ENCODE measurements at regions of chr12 and their contacts with region 1.

Region 1: DNA sequence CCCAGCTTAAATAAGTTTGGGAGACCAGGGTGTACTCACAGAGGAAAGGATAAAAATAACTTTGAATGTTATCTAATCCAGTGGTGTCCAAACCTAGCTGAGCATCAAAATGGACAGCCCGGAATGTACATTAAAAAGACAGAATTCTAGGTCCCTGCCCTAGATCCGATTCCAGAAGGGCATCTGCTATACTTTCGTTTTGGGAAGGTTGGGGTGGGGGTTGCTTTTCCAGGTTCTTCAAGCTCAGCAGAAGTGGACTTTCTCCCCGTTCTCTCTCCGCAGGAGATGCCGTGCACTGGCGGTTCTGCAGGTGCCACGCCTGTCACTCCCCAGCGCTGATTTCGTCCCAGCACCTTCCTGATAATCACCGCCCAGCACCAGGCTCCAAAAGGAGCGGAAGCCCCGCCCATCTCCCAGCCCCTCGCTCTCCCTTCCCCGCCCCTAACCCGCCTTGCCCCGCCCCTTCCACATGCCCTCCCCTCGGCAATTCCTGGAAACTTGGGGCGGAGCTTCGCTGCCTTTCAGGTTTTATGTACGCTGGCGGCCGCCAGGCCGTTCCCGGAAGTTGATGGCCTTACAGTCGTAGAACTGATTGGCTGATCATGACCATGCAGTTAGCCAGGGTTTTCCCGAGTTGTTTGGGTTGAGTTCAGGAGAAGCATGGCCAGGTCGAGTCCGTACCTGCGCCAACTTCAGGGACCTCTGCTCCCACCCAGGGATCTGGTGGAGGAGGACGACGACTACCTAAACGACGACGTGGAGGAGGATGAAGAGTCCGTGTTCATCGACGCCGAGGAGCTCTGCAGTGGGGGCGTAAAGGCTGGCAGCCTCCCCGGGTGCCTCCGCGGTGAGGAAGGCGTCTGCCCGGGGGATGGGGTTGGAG is at the start of gene HELB:
- DNase-seq: peak; percentile 99
- H3K4me3 Mint-ChIP-seq: peak within 1 kb of the TSS; percentile 100
- H3K27ac Mint-ChIP-seq: peak within 1 kb of the TSS; percentile 100
- H3K4me1 Mint-ChIP-seq: peaks cover 36% of the 10 kb centered on the region
- H3K27me3 Mint-ChIP-seq: no peaks in the 10 kb centered on the region
- total RNA-seq, gene HELB: 23.0 to 23.7 TPM

Region 2: GRCh38 chr12:64403707-64404469 is 1898.3 kb before region 1 on chr12 and contains the start of gene XPOT:
- CTCF ChIA-PET with region 1: no interaction called
- intact Hi-C with region 1: loop called (anchors 10 kb)
- DNase-seq: peak; percentile 94
- H3K4me3 Mint-ChIP-seq: peak within 1 kb of the TSS; percentile 95
- H3K27ac Mint-ChIP-seq: peak within 1 kb of the TSS; percentile 97
- H3K4me1 Mint-ChIP-seq: peaks cover 28% of the 10 kb centered on the region
- H3K27me3 Mint-ChIP-seq: no peaks in the 10 kb centered on the region
- total RNA-seq, gene XPOT: 227 to 236 TPM

Region 3: GRCh38 chr12:66130277-66131066 is 171.7 kb before region 1 on chr12 and contains the start of gene LLPH:
- CTCF ChIA-PET with region 1: no interaction called
- intact Hi-C with region 1: loop called (anchors 1 kb)
- DNase-seq: peak; percentile 94
- H3K4me3 Mint-ChIP-seq: peak within 1 kb of the TSS; percentile 96
- H3K27ac Mint-ChIP-seq: peak within 1 kb of the TSS; percentile 95
- H3K4me1 Mint-ChIP-seq: peaks cover 53% of the 10 kb centered on the region
- H3K27me3 Mint-ChIP-seq: no peaks in the 10 kb centered on the region
- total RNA-seq, gene LLPH: 25.6 to 26.0 TPM

Region 4: GRCh38 chr12:66279123-66279712 is 23.0 kb before region 1 on chr12:
- CTCF ChIA-PET with region 1: interaction called, 7 read pairs
- intact Hi-C with region 1: loop called (anchors 1 kb)
- DNase-seq: peak; percentile 62
- H3K4me3 Mint-ChIP-seq: no peak overlapping the region
- H3K27ac Mint-ChIP-seq: no peak overlapping the region
- H3K4me1 Mint-ChIP-seq: peaks cover 40% of the 10 kb centered on the region
- H3K27me3 Mint-ChIP-seq: no peaks in the 10 kb centered on the region

Region 5: GRCh38 chr12:66319266-66319954 is 17.2 kb after region 1 on chr12:
- CTCF ChIA-PET with region 1: no interaction called
- intact Hi-C with region 1: loop called (anchors 2 kb)
- DNase-seq: no peak
- H3K4me3 Mint-ChIP-seq: no peak overlapping the region
- H3K27ac Mint-ChIP-seq: no peak overlapping the region
- H3K4me1 Mint-ChIP-seq: peaks cover 52% of the 10 kb centered on the region
- H3K27me3 Mint-ChIP-seq: no peaks in the 10 kb centered on the region

Region 6: DNA sequence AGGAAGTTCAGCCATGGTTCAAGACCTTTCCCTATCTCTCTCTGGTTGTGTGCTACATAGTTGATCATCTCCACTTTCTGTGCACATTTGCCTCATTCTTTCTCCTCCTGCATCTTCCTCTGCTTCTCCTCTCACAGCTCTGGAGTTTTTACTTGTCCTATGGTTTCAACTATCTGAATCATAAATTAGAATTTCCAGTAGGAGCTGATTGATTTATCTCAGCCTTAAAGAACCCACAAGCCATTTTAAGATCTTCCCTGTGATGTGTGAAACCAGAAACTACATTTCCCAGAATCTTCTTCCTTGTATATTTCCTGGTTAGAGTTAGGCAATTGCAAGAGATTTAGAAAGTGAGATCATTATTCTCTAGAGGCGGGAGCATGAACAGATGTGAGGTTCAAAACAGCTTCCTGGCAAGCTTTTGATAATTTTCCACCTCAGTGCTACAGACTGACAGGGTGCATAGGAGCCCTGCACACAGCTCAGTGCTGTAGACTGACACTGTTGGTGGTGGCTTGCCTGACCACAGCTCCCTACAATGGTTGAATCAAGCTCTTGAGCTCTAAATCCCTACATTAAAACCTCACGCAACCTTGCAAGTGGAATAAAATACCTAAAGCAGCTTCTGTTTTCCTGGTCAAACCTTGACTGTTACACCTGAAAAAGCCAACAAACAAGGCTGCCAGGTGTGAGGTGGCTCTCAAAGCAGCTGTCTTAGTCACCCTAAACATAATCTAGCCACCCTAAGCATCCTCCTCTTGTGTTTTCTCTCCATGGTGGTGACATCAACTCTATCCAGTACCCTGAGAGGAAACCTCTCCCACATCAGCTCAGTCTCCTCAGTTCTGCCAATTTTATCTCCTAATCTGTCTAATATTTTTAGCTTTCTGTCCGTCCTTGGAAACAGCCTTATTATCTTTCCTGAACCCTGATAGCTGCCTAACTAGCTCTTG is 1878.9 kb after region 1 on chr12:
- CTCF ChIA-PET with region 1: no interaction called
- intact Hi-C with region 1: loop called (anchors 5 kb)
- DNase-seq: peak; percentile 70
- H3K4me3 Mint-ChIP-seq: no peak overlapping the region
- H3K27ac Mint-ChIP-seq: peak overlapping the region; percentile 93
- H3K4me1 Mint-ChIP-seq: peaks cover 56% of the 10 kb centered on the region
- H3K27me3 Mint-ChIP-seq: no peaks in the 10 kb centered on the region

Measured in activated naive CD4-positive, alpha-beta T cell treated with anti-CD3 and anti-CD28 coated beads for 36 hours (primary cell).